Left ventricle myocardium superior (tissue), 1 donor: ENCODE measurements at regions of chr2 and their contacts with region 1.

Region 1: DNA sequence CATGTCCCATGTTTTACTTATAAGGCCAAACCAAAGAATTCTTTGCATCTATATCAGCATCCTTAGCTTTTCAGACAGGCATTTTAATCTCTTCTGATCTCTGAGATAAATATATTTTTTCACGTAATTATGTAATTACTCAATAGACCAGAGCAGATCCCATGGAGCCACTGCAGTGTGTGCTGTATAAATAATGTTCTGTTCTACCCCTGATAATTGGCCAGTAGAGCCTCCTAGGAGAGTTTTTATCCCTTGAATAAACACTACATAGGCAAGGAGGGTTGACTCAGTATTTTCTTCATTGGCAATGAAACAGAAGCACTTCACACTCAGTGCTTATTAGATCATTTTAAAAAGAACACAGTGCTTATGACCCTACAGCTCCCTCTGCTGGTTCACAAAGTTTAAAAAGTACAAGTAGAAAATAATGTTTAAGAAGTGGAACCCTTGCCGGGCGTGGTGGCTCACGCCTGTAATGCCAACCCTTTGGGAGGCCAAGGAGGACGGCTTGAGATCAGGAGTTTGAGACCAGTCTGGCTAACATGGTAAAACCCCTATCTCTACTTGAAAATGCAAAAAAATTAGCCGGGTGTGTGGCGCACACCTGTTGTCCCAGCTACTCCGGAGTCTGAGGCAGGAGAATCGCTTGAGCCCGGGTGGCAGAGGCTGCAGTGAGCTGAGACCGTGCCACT is 91.9 kb downstream of the PPP1R1C start:
- DNase-seq: peak; percentile 25
- ATAC-seq: peak; percentile 98

Region 2: GRCh38 chr2:181742922-181743722 is 334.5 kb before region 1 on chr2:
- intact Hi-C with region 1: loop called (anchors 5 kb)
- DNase-seq: no peak
- ATAC-seq: no peak

Region 3: GRCh38 chr2:181904022-181904632 is 173.5 kb before region 1 on chr2:
- intact Hi-C with region 1: loop called (anchors 5 kb)
- DNase-seq: no peak
- ATAC-seq: peak; percentile 41

Region 4: GRCh38 chr2:182066400-182067087 is 11.1 kb before region 1 on chr2:
- intact Hi-C with region 1: loop called (anchors 1 kb)
- DNase-seq: no peak
- ATAC-seq: no peak